Breast epithelium (tissue), 4 donors: ENCODE measurements at regions of chr11 and their contacts with region 1.

Region 1: GRCh38 chr11:125935618-125936199 is 10.1 kb upstream of the VSIG10L2 start:
- DNase-seq: no peak
- H3K4me3 ChIP-seq: no peak overlapping the region
- H3K27ac ChIP-seq: no peak overlapping the region
- H3K4me1 ChIP-seq: no peaks in the 10 kb centered on the region
- H3K27me3 ChIP-seq: no peaks in the 10 kb centered on the region
- CTCF ChIP-seq: no peak
- POLR2A ChIP-seq: no peak

Region 2: DNA sequence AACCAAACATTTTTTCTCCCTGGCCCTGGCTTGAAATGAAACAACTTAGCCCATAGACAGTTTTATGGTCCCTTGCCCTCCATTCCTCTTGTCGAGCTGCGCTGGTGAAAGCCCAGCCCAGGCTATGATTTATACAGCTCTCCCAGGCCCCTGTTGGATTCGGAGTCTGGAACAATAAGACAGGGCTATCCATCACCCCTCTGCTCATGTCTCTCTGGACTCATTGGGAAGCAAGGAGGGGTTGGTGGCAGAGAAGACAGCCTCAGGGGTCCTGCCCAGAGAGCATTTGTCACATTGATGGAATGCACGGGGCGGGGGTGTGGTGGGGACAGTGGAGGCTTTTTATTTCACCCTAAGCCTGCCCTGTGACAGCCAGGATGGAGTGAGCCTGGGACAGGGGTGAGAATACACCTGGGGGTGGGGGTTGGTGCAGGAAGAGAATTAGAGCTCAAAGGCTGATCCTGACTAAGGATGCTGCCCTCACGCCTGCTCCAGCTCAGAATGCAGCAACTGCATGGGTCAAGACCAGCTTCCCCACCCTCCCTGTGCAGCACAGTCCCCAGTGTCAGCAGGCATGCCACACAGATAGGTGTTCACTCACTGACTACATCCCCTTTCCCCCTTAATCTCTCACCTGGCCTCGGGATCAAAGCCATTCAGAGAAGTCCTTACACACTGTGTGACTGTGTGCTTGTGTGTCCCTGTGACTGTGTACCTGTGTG is 781.2 kb before region 1 on chr11:
- intact Hi-C with region 1: loop called (anchors 5 kb)
- DNase-seq: no peak
- H3K4me3 ChIP-seq: no peak overlapping the region
- H3K27ac ChIP-seq: no peak overlapping the region
- H3K4me1 ChIP-seq: no peaks in the 10 kb centered on the region
- H3K27me3 ChIP-seq: peaks cover 0 to 16% of the 10 kb centered on the region in 2 donors
- CTCF ChIP-seq: no peak
- POLR2A ChIP-seq: no peak

Region 3: DNA sequence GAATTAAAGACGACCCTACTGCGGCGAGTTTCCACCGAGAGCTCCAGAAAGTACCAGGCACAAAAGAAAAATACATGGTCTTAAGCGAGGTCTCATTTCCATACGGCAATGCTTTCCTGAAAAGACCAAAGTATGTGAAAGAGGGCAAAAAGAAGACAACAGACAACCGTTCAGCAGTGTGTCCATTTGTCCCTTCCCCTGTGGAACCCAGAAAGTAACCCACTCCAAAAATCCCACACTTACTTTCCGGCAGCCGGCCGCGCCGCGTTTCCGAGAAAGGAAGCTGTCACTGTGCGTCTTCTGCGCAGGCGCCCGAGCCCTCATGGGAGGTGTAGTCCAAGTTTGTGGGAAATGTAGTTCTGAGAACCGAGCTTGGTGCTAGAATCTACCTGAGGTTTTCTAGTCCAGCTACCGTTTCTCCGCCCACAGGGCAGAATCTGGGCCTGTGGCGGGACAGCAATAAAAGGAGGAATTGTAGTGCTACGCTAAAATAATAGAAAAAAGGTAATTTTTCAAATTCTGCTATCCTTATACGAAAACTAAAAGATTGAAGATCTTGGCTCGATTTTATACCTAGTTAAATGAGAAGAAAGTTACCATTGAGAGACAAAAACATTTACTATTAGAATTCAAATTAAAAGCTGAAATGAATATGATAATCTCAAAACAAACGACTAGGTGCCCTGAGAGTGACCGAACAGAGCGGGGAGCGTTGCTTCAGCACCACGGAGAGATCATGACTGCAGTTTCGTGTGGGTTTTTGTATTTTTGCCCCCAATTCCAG is 32.6 kb before region 1 on chr11 and contains the start of gene PUS3:
- intact Hi-C with region 1: loop called (anchors 2 kb)
- DNase-seq: peak; percentile 76 to 86
- H3K4me3 ChIP-seq: peak within 1 kb of the TSS; percentile 54 to 70 (median 65)
- H3K27ac ChIP-seq: peak within 1 kb of the TSS; percentile 53 to 85
- H3K4me1 ChIP-seq: peaks cover 0 to 7% of the 10 kb centered on the region in 2 donors
- H3K27me3 ChIP-seq: peaks cover 8 to 26% of the 10 kb centered on the region in 2 donors
- CTCF ChIP-seq: no peak
- POLR2A ChIP-seq: no peak
- total RNA-seq, gene PUS3: 5.6 to 10.2 (median 8.6) TPM